Activated naive CD4-positive, alpha-beta T cell treated with anti-CD3 and anti-CD28 coated beads, Interleukin-2, amount 10 ng/mL, durations not matched to agents 7 days and 5 days (primary cell): ENCODE measurements at regions of chr11 and their contacts with region 1.

Region 1: DNA sequence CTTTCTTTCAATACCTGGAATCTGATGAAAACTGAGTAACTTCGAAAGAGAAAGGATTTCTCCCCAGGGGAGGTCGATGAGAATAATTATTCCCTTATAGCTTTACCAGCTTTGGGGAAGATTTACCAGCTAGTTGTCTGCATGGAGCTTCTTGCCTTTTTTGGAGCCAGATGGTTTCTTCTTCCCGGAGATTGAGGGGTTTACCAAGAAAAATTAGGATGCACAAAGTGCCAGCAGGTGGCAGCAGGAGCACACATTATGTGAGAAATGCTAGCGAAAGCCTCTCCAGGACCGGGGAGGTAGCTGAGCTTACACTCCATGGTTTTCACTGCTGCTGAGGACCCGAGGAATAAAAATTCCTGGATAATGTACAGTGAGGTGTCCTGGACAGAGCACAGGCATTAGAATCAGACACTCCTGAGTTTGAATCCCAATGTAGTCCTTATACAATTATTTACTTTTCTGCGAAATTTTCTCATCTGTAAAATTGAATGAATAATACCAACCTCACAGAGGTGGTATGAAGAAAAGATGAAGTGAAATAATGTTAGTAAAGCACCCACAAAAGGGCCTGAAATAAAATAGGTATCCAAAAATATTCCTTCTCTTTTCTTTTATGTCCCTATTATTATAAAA is 46.0 kb upstream of the PARVA start:
- DNase-seq: peak; percentile 85
- H3K4me3 Mint-ChIP-seq: no peak overlapping the region
- H3K27ac Mint-ChIP-seq: no peak overlapping the region
- H3K4me1 Mint-ChIP-seq: no peaks in the 10 kb centered on the region
- H3K27me3 Mint-ChIP-seq: peaks cover 16% of the 10 kb centered on the region

Region 2: GRCh38 chr11:12361682-12362081 is 30.3 kb after region 1 on chr11:
- CTCF ChIA-PET with region 1: interaction called, 11 read pairs
- DNase-seq: no peak
- H3K4me3 Mint-ChIP-seq: no peak overlapping the region
- H3K27ac Mint-ChIP-seq: no peak overlapping the region
- H3K4me1 Mint-ChIP-seq: peaks cover 70% of the 10 kb centered on the region
- H3K27me3 Mint-ChIP-seq: peaks cover 8% of the 10 kb centered on the region

Region 3: GRCh38 chr11:12599408-12600143 is 268.2 kb after region 1 on chr11:
- CTCF ChIA-PET with region 1: interaction called, 23 read pairs
- DNase-seq: peak; percentile 52
- H3K4me3 Mint-ChIP-seq: no peak overlapping the region
- H3K27ac Mint-ChIP-seq: no peak overlapping the region
- H3K4me1 Mint-ChIP-seq: peaks cover 15% of the 10 kb centered on the region
- H3K27me3 Mint-ChIP-seq: peaks cover 15% of the 10 kb centered on the region

Region 4: GRCh38 chr11:12888525-12889158 is 557.3 kb after region 1 on chr11:
- CTCF ChIA-PET with region 1: interaction called, 95 read pairs
- DNase-seq: peak; percentile 79
- H3K4me3 Mint-ChIP-seq: no peak overlapping the region
- H3K27ac Mint-ChIP-seq: no peak overlapping the region
- H3K4me1 Mint-ChIP-seq: no peaks in the 10 kb centered on the region
- H3K27me3 Mint-ChIP-seq: peaks cover 15% of the 10 kb centered on the region